Psoas muscle (tissue), 8 donors: ENCODE measurements at regions of chr3 and their contacts with region 1.

Region 1: GRCh38 chr3:185770109-185770508 is 54.7 kb downstream of the IGF2BP2 start:
- DNase-seq: no peak
- ATAC-seq: no peak
- H3K4me3 ChIP-seq: no peak overlapping the region
- H3K27ac ChIP-seq: no peak overlapping the region
- H3K4me1 ChIP-seq: peaks cover under 1% of the 10 kb centered on the region
- H3K27me3 ChIP-seq: no peaks in the 10 kb centered on the region
- CTCF ChIP-seq: no peak

Region 2: GRCh38 chr3:185733980-185734724 is 36.0 kb before region 1 on chr3:
- intact Hi-C with region 1: loop called (anchors 2 to 5 kb)
- DNase-seq: no peak
- ATAC-seq: peak in 3 of 4 donors; percentile 90 to 93 (median 93)
- H3K4me3 ChIP-seq: no peak overlapping the region
- H3K27ac ChIP-seq: no peak overlapping the region
- H3K4me1 ChIP-seq: no peaks in the 10 kb centered on the region
- H3K27me3 ChIP-seq: no peaks in the 10 kb centered on the region
- CTCF ChIP-seq: peak; percentile 75

Region 3: DNA sequence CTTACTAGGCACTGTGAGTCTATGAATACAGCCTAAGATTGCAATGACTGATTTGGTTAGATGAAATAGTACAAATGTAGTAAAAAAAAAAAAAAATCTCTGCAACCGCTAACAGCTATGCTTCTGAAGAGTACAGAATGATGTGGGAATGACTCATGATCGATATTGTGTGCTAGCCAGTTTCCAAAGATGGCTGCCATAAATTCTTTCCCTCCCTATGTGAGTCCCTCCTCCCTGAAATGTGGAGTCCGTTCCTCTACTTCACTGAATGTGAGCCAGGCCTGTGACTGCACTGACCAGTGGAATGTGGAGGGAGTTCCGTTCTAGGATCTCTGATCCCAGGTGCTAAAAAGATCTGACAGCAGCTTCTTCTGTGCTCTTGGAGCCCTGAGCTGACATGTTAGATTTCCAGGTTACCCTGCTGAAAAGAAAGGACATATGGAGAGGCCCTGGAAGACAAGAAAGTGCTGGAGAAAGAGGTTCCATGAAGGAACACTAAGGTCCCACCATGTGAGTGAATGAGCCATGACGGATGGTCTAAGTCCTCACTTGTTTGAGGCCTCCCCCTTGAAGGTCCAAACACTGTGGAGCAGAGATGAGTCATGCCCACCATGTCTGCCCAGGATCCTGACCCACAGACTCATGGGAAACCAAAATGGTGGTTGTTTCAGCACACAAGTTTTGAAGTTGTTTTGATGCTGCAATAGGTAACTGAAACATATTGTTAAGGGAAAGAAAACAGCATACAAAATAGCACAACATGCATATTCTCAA is 545.7 kb after region 1 on chr3:
- intact Hi-C with region 1: no loop called
- DNase-seq: no peak
- ATAC-seq: no peak
- H3K4me3 ChIP-seq: no peak overlapping the region
- H3K27ac ChIP-seq: no peak overlapping the region
- H3K4me1 ChIP-seq: no peaks in the 10 kb centered on the region
- H3K27me3 ChIP-seq: no peaks in the 10 kb centered on the region
- CTCF ChIP-seq: no peak